Posterior cingulate gyrus (tissue), 11 donors: ENCODE measurements at regions of chr11 and their contacts with region 1.

Region 1: DNA sequence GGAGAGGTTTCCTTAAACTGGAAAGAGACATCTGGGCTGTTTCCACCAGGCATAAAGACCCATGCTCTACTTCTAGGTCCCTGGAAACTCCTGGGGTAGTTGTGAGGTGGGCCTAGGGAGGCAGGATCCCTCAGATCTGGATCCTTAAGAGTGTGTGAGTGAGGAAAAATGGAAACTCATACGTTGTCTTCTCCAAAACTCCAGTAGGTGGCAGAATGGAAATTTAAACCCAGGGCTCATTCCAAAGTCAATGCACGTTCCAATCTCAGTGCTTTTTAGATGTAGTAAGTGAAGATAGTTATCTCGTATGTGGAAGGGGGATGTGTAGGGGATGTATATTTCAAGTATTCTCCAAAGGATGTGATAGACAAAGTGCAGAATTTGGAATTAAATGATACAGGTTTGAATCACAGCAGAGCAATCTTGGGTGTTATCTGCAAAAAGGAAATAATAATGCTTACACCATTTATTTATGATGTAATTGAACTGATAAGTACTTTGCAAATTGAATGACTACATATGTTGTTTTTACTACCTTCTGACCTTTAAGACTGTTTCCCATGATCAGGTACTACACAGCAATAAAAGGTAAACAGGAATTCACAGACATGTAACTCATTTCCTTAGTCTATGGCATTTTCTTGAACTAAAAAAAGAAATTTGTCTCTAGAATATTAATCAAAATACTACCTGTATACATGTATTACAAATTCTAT is 13.1 kb upstream of the MMP1 start:
- DNase-seq: no peak

Region 2: GRCh38 chr11:102940714-102941588 is 129.8 kb after region 1 on chr11:
- intact Hi-C with region 1: loop called (anchors 5 kb)
- DNase-seq: peak in 3 of 10 donors; percentile 14 to 19 (median 14)